Vagina (tissue), 2 donors: ENCODE measurements at regions of chr4 and their contacts with region 1.

Region 1: GRCh38 chr4:100581332-100581731 is 63.5 kb upstream of the EMCN start:
- DNase-seq: no peak
- H3K4me3 ChIP-seq: no peak overlapping the region
- H3K27ac ChIP-seq: no peak overlapping the region
- H3K4me1 ChIP-seq: no peaks in the 10 kb centered on the region
- H3K27me3 ChIP-seq: no peaks in the 10 kb centered on the region
- CTCF ChIP-seq: no peak
- POLR2A ChIP-seq: no peak

Region 2: GRCh38 chr4:100113732-100114131 is 467.6 kb before region 1 on chr4:
- intact Hi-C with region 1: no loop called
- DNase-seq: no peak
- H3K4me3 ChIP-seq: no peak overlapping the region
- H3K27ac ChIP-seq: no peak overlapping the region
- H3K4me1 ChIP-seq: no peaks in the 10 kb centered on the region
- H3K27me3 ChIP-seq: no peaks in the 10 kb centered on the region
- CTCF ChIP-seq: no peak
- POLR2A ChIP-seq: no peak

Region 3: DNA sequence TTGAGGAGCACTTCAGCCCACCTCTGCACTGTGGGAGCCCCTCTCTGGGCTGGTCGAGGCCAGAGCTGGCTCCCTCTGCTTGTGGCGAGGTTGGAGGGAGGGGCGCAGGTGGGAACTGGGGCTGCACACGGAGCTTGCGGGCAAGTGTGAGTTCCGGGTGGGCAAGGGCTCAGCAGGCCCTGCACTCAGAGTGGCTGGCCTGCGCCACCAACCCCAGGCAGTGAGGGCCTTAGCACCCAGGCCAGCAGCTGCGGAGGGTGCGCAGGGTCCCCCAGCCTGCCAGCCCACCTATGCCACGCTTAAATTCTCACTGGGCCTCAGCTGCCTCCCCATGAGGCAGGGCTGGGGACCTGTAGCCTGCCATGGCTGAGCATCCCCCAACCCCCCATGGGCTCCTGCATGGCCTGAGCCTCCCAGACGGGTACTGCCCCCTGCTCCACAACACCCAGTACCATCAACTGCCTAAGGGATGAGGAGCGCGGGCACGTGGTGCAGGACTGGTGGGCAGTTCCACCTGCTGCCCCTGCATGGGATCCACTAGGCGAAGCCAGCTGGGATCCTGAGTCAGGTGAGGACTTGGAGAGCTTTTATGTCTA is 1653.0 kb after region 1 on chr4:
- intact Hi-C with region 1: loop called (anchors 5 kb)
- DNase-seq: no peak
- H3K4me3 ChIP-seq: no peak overlapping the region
- H3K27ac ChIP-seq: no peak overlapping the region
- H3K4me1 ChIP-seq: no peaks in the 10 kb centered on the region
- H3K27me3 ChIP-seq: no peaks in the 10 kb centered on the region
- CTCF ChIP-seq: no peak
- POLR2A ChIP-seq: no peak